Ascending aorta (tissue), 2 donors: ENCODE measurements at regions of chr2 and their contacts with region 1.

Region 1: GRCh38 chr2:18435421-18436037 is 124.9 kb downstream of the RDH14 start:
- DNase-seq: no peak
- H3K4me3 ChIP-seq: no peak overlapping the region
- H3K27ac ChIP-seq: no peak overlapping the region
- H3K4me1 ChIP-seq: peaks cover 0 to 10% of the 10 kb centered on the region in 2 donors
- H3K27me3 ChIP-seq: no peaks in the 10 kb centered on the region
- CTCF ChIP-seq: peak in 2 of 3 experiments; percentile 42 to 68

Region 2: GRCh38 chr2:18339326-18339725 is 96.2 kb before region 1 on chr2:
- intact Hi-C with region 1: no loop called
- DNase-seq: no peak
- H3K4me3 ChIP-seq: no peak overlapping the region
- H3K27ac ChIP-seq: no peak overlapping the region
- H3K4me1 ChIP-seq: no peaks in the 10 kb centered on the region
- H3K27me3 ChIP-seq: no peaks in the 10 kb centered on the region
- CTCF ChIP-seq: no peak

Region 3: DNA sequence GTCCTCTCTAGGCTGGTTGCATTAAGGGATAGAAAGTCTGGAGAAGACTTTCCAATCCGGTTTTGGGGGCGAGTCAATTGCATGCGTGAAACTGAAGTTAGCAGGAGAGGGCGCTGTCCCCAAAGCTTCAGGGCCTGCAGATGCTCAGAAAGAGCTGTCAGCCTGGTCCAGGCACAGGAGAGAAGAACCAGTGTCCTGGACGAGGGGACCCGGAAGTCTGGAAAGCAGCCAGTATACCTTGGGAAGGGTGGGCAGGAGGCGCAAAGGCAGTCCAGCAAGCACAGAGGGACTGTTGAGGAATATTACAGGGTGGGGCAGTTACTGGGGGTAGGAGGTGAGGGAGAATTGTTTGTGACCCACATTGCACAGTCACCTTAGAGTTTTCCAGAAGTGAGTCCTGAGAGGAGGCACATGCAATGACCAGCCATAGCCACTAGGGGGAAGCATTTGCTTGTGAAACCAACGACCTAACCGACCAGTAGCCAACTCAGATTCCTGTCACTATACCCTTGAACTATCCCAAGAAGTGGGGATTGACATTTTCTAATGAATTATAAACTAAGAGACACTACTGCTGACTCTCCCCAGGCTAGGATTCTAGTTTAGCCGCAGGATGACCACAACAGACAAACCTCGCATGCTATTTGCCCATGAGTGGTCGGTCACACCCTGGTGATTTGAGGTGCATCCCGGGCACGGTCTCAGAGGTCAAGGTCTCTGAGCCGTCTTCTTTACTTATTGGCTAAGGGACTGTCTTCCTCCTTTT is 47.9 kb before region 1 on chr2:
- intact Hi-C with region 1: no loop called
- DNase-seq: peak in 1 of 2 donors; percentile 92
- H3K4me3 ChIP-seq: no peak overlapping the region
- H3K27ac ChIP-seq: peak overlapping the region; percentile 44 to 46
- H3K4me1 ChIP-seq: peaks cover 0 to 3% of the 10 kb centered on the region in 2 donors
- H3K27me3 ChIP-seq: no peaks in the 10 kb centered on the region
- CTCF ChIP-seq: peak; percentile 66 to 90 (median 89)

Region 4: GRCh38 chr2:18455236-18455862 is 19.8 kb after region 1 on chr2:
- intact Hi-C with region 1: loop called (anchors 2 kb)
- DNase-seq: peak in 1 of 2 donors; percentile 71
- H3K4me3 ChIP-seq: no peak overlapping the region
- H3K27ac ChIP-seq: peak overlapping the region; percentile 82 to 83
- H3K4me1 ChIP-seq: peaks cover 9 to 22% of the 10 kb centered on the region in 2 donors
- H3K27me3 ChIP-seq: no peaks in the 10 kb centered on the region
- CTCF ChIP-seq: peak in 2 of 3 experiments; percentile 43

Region 5: DNA sequence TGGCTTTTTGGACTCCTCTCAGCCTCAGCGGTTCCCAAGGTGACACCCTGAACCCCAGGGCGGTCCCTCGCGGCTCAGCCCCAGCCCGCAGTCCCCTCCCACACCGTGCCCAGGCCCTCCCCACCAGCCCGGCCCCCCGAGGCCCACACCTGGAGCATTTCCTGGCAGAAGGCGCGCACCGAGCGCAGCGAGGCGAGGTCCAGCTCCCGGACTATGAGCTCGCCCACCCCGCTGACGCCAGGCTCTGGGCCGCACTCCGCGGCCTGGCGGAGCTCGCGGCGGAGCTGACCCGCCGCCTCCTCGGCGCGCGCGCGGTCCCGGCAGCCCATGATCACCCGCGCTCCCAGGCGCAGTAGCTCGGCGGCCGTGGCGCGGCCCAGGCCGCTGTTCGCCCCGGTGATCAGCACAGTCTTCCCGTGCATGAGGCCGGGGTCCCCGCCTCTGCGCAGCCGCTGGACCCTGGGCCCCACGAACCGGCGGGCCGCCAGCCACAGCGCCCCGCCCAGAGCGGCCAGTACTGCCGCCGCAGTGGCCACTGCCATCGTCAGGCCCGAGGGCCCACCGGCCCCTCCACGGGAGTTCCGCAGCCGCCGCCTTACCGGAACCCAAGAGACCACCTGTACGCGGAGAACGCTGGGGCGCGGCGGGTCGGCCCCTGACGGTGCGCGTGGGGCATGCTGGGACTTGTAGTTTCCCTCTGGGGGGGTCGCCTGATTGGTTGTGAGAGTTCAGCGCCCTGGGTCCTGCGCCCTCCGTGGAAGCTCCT is 124.7 kb after region 1 on chr2 and contains the start of gene RDH14:
- intact Hi-C with region 1: loop called (anchors 5 kb)
- DNase-seq: peak; percentile 87 to 98
- H3K4me3 ChIP-seq: peak within 1 kb of the TSS; percentile 78 to 90
- H3K27ac ChIP-seq: peak within 1 kb of the TSS; percentile 93 to 95
- H3K4me1 ChIP-seq: peaks cover 5 to 25% of the 10 kb centered on the region in 2 donors
- H3K27me3 ChIP-seq: no peaks in the 10 kb centered on the region
- CTCF ChIP-seq: no peak
- total RNA-seq, gene RDH14: 51.2 TPM

Region 6: GRCh38 chr2:18741895-18742732 is 306.6 kb after region 1 on chr2:
- intact Hi-C with region 1: loop called (anchors 2 kb)
- DNase-seq: no peak
- H3K4me3 ChIP-seq: peak overlapping the region in 1 of 2 donors; percentile 33
- H3K27ac ChIP-seq: no peak overlapping the region
- H3K4me1 ChIP-seq: peaks cover 0 to 12% of the 10 kb centered on the region in 2 donors
- H3K27me3 ChIP-seq: no peaks in the 10 kb centered on the region
- CTCF ChIP-seq: peak in 2 of 3 experiments; percentile 30 to 55

Region 7: GRCh38 chr2:18889565-18890332 is 454.2 kb after region 1 on chr2:
- intact Hi-C with region 1: loop called (anchors 10 kb)
- DNase-seq: no peak
- H3K4me3 ChIP-seq: no peak overlapping the region
- H3K27ac ChIP-seq: peak overlapping the region; percentile 27 to 65
- H3K4me1 ChIP-seq: peaks cover 0 to 9% of the 10 kb centered on the region in 2 donors
- H3K27me3 ChIP-seq: no peaks in the 10 kb centered on the region
- CTCF ChIP-seq: no peak